PC-9 (cell line): ENCODE measurements at regions of chr11 and their contacts with region 1.

Region 1: GRCh38 chr11:9757809-9758636 is 94.1 kb downstream of the SWAP70 start:
- DNase-seq: peak in 1 of 2 experiments; percentile 75
- H3K4me3 ChIP-seq: peak overlapping the region; percentile 81
- H3K27ac ChIP-seq: peak overlapping the region; percentile 76
- H3K4me1 ChIP-seq: peaks cover 29% of the 10 kb centered on the region
- H3K27me3 ChIP-seq: no peaks in the 10 kb centered on the region
- CTCF ChIP-seq: peak; percentile 42; the same call in 1 of the 2 replicates

Region 2: GRCh38 chr11:9688716-9689511 is 69.1 kb before region 1 on chr11:
- CTCF ChIA-PET with region 1: no interaction called
- POLR2A ChIA-PET with region 1: no interaction called
- intact Hi-C with region 1: no loop called
- DNase-seq: peak in 1 of 2 experiments; percentile 2
- H3K4me3 ChIP-seq: no peak overlapping the region
- H3K27ac ChIP-seq: no peak overlapping the region
- H3K4me1 ChIP-seq: no peaks in the 10 kb centered on the region
- H3K27me3 ChIP-seq: no peaks in the 10 kb centered on the region
- CTCF ChIP-seq: no peak

Region 3: GRCh38 chr11:9861860-9862725 is 104.1 kb after region 1 on chr11:
- CTCF ChIA-PET with region 1: no interaction called
- POLR2A ChIA-PET with region 1: no interaction called
- intact Hi-C with region 1: loop called (anchors 5 kb)
- DNase-seq: peak; percentile 37 to 41
- H3K4me3 ChIP-seq: no peak overlapping the region
- H3K27ac ChIP-seq: no peak overlapping the region
- H3K4me1 ChIP-seq: no peaks in the 10 kb centered on the region
- H3K27me3 ChIP-seq: no peaks in the 10 kb centered on the region
- CTCF ChIP-seq: peak; percentile 66

Region 4: GRCh38 chr11:9972989-9973388 is 215.0 kb after region 1 on chr11:
- CTCF ChIA-PET with region 1: no interaction called
- POLR2A ChIA-PET with region 1: no interaction called
- intact Hi-C with region 1: loop called (anchors 1 kb)
- DNase-seq: no peak
- H3K4me3 ChIP-seq: no peak overlapping the region
- H3K27ac ChIP-seq: no peak overlapping the region
- H3K4me1 ChIP-seq: no peaks in the 10 kb centered on the region
- H3K27me3 ChIP-seq: no peaks in the 10 kb centered on the region
- CTCF ChIP-seq: peak; percentile 74

Region 5: GRCh38 chr11:10322830-10323792 is 565.1 kb after region 1 on chr11:
- CTCF ChIA-PET with region 1: no interaction called
- POLR2A ChIA-PET with region 1: interaction called, 7 read pairs
- intact Hi-C with region 1: loop called (anchors 1 kb)
- DNase-seq: peak; percentile 42 to 85
- H3K4me3 ChIP-seq: no peak overlapping the region; the same call in 1 of the 2 replicates
- H3K27ac ChIP-seq: peak overlapping the region; percentile 88
- H3K4me1 ChIP-seq: peaks cover 46% of the 10 kb centered on the region
- H3K27me3 ChIP-seq: no peaks in the 10 kb centered on the region
- CTCF ChIP-seq: peak; percentile 58

Region 6: DNA sequence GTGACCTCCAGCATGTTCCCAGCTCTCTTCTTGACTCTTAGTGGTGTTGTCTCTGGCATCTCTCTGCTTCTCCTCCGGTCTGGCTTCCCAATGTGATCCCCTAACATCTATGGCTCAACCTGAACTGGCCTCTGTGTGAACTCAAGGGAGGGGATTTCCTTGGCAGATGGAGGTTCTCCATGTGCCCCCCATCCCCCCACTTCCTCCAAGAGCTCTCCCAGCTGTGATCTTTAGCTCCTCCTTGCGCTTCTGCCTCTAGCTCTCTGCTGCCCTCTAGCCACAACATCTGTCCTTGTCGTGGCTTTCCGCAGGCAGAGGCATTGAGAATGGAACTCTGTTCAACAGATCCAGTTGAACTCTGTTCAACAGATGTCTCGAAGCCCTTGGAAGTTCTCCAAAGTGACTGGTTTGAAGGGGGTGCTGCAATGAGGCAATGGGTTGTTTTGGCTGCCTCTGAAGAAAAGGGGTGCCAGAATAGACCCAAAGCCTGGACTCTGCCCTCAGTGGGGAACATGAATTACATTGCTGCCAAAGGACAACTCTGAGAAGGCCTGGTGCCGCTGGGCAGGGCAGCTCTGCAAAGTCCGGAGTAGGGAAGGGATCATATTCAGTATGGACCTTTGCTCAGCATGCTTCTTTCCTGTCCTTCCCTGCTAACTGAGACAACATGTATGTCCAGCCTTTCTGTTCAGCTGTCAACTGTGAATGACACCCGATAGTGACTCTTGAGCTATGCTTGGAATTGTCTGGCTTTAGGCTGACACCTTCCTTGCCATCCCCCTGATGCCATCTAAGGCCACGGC is 608.7 kb after region 1 on chr11:
- CTCF ChIA-PET with region 1: no interaction called
- POLR2A ChIA-PET with region 1: no interaction called
- intact Hi-C with region 1: loop called (anchors 1 kb)
- DNase-seq: peak; percentile 67 to 73
- H3K4me3 ChIP-seq: no peak overlapping the region
- H3K27ac ChIP-seq: no peak overlapping the region
- H3K4me1 ChIP-seq: no peaks in the 10 kb centered on the region
- H3K27me3 ChIP-seq: no peaks in the 10 kb centered on the region
- CTCF ChIP-seq: peak; percentile 80